ENCODE measurements at regions of chr3 and their contacts with region 1.

Region 1: GRCh38 chr3:57544181-57545125 is at the start of gene DNAH12:
- DNase-seq: peak; percentile 95
- ATAC-seq: peak; percentile 99
- H3K4me3 Mint-ChIP-seq: peak within 1 kb of the TSS; percentile 63
- H3K27ac Mint-ChIP-seq: peak within 1 kb of the TSS; percentile 93
- H3K4me1 Mint-ChIP-seq: peaks cover 9% of the 10 kb centered on the region
- H3K27me3 Mint-ChIP-seq: no peaks in the 10 kb centered on the region
- CTCF ChIP-seq: no peak
- total RNA-seq, gene DNAH12: 0.02 TPM in 1 of 3 replicates, not detected in the others

Region 2: DNA sequence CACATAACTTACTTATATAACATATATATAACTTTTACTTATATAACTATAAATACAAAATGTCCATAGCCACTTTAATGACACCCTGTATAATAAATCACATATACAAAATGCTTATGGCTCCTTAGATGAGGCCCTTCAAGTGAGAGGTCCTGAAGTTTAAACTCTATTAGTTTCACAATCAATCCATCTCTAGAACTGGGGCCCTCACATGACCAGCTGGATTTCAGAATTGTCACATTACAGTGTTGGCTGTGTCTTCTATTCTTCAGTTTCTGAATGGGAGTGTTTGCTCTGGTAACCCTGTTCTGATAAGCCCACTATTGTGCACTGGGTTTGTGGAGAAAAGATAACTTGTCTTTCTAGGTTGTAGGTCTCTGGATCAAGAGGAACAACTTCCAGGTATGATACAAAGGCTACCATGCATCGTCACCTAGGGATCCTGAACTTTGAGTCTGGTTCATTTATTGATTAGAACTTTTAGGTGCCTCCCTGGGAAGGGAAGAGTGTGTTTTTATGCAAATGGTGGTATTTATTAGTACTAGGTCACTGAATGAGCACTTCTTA is 108.2 kb before region 1 on chr3:
- CTCF ChIA-PET with region 1: no interaction called
- POLR2A ChIA-PET with region 1: no interaction called
- DNase-seq: no peak
- ATAC-seq: no peak
- H3K4me3 Mint-ChIP-seq: no peak overlapping the region
- H3K27ac Mint-ChIP-seq: no peak overlapping the region
- H3K4me1 Mint-ChIP-seq: no peaks in the 10 kb centered on the region
- H3K27me3 Mint-ChIP-seq: no peaks in the 10 kb centered on the region
- CTCF ChIP-seq: no peak

Region 3: DNA sequence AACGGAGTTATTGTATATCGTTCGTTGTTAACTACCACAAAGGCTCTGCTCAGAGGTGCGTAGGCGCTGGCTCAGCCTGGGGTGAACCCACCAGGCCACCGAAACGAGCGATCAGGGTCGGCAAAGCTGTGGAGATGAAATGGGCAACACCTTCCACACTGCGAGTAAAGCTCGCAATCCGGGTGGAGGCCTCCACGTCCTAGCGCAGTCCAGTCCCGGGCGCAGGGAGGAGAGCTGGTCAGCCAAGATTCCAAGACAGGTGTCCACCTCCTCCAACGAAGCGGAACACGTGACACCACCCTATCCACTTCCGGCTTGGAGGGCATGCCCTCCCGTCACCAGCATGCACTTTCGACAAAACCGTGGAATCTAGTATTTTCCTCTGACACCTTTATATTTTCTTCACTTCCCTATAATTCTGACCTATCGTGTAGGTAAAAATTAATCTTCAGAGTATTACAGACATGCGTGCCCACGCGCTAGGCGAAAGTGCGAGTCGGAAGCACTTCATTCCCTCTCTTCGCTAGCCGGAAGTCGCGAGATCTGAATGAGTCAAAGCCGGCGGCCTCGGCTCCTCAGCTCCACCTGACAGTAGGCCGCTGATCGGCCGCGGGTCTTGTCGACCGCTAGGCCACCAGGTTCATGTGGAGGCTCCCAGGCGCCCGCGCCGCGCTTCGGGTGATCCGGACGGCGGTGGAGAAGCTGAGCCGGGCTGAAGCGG is 11.4 kb after region 1 on chr3 and contains the start of gene PDE12:
- CTCF ChIA-PET with region 1: interaction called, 6 read pairs
- POLR2A ChIA-PET with region 1: interaction called, 11 read pairs
- DNase-seq: peak; percentile 81
- ATAC-seq: peak; percentile 88
- H3K4me3 Mint-ChIP-seq: peak within 1 kb of the TSS; percentile 95
- H3K27ac Mint-ChIP-seq: peak within 1 kb of the TSS; percentile 100
- H3K4me1 Mint-ChIP-seq: peaks cover 18% of the 10 kb centered on the region
- H3K27me3 Mint-ChIP-seq: peaks cover 10% of the 10 kb centered on the region
- CTCF ChIP-seq: no peak
- total RNA-seq, gene PDE12: 16.2 to 16.9 TPM (median 16.4 TPM) in 3 replicates